Panc1 (cell line): ENCODE measurements at regions of chrX and their contacts with region 1.

Region 1: DNA sequence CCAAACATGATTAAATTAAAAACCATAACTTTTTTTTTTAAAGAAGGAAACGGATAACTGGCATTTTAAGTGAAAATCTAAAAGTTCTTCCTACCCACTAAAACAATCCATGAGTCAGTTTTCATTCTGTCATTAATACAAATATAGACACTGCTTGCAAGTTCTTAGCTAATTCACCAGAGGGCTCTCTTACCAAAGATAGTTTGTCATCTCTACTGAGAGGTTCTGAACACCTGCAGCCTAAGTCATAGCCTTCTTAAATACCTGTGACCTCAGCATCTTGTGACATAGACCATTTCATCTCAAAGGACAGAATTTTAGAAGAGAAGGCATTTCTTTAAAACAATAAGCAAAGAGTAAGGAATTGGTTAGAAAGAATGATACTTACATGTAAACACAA is 65.3 kb upstream of the FAM120C start:
- DNase-seq: peak; percentile 8
- ATAC-seq: no peak
- H3K4me3 ChIP-seq: no peak overlapping the region
- H3K27ac ChIP-seq: no peak overlapping the region
- H3K4me1 ChIP-seq: no peaks in the 10 kb centered on the region
- H3K27me3 ChIP-seq: peaks cover 4% of the 10 kb centered on the region
- CTCF ChIP-seq: peak; percentile 58; the same call in 1 of the 2 replicates

Region 2: GRCh38 chrX:54439967-54440871 is 191.9 kb after region 1 on chrX and contains the start of gene TSR2:
- CTCF ChIA-PET with region 1: no interaction called
- POLR2A ChIA-PET with region 1: interaction called, 5 read pairs
- in situ Hi-C with region 1: no loop called
- intact Hi-C with region 1: loop called (anchors 10 kb)
- DNase-seq: peak; percentile 69
- ATAC-seq: peak; percentile 99
- H3K4me3 ChIP-seq: peak within 1 kb of the TSS; percentile 93 to 95
- H3K27ac ChIP-seq: peak within 1 kb of the TSS; percentile 78
- H3K4me1 ChIP-seq: 0 out of 2 replicates have a peak, but pooled peaks cover 3% of the 10 kb centered on the region
- H3K27me3 ChIP-seq: no peaks in the 10 kb centered on the region
- CTCF ChIP-seq: no peak; the same call in 1 of the 2 replicates
- total RNA-seq, gene TSR2: 37.9 TPM

Region 3: GRCh38 chrX:54479136-54480111 is 231.1 kb after region 1 on chrX:
- CTCF ChIA-PET with region 1: interaction called, 10 read pairs
- POLR2A ChIA-PET with region 1: no interaction called
- in situ Hi-C with region 1: no loop called
- intact Hi-C with region 1: no loop called
- DNase-seq: no peak
- ATAC-seq: no peak
- H3K4me3 ChIP-seq: no peak overlapping the region
- H3K27ac ChIP-seq: no peak overlapping the region
- H3K4me1 ChIP-seq: peaks cover 19% of the 10 kb centered on the region
- H3K27me3 ChIP-seq: no peaks in the 10 kb centered on the region
- CTCF ChIP-seq: no peak